Mammary epithelial cell (primary cell): ENCODE measurements at regions of chr22 and their contacts with region 1.

Region 1: GRCh38 chr22:44625981-44626687 is 75.9 kb upstream of the PRR5 start:
- DNase-seq: peak; percentile 35
- H3K4me3 ChIP-seq: no peak overlapping the region
- H3K27ac ChIP-seq: no peak overlapping the region
- H3K4me1 ChIP-seq: no peaks in the 10 kb centered on the region
- H3K27me3 ChIP-seq: peaks cover 2% of the 10 kb centered on the region
- CTCF ChIP-seq: peak; percentile 90 to 93

Region 2: GRCh38 chr22:43273902-43274484 is 1352.1 kb before region 1 on chr22:
- CTCF ChIA-PET with region 1: no interaction called
- dilution Hi-C with region 1: no loop called
- in situ Hi-C with region 1: no loop called
- intact Hi-C with region 1: loop called (anchors 10 kb)
- DNase-seq: peak; percentile 41
- H3K4me3 ChIP-seq: no peak overlapping the region
- H3K27ac ChIP-seq: no peak overlapping the region
- H3K4me1 ChIP-seq: peaks cover 11% of the 10 kb centered on the region
- H3K27me3 ChIP-seq: peaks cover 2% of the 10 kb centered on the region
- CTCF ChIP-seq: peak; percentile 65 to 84

Region 3: GRCh38 chr22:43884600-43885325 is 741.4 kb before region 1 on chr22:
- CTCF ChIA-PET with region 1: interaction called, 9 read pairs
- dilution Hi-C with region 1: no loop called
- in situ Hi-C with region 1: no loop called
- intact Hi-C with region 1: loop called (anchors 2 kb)
- DNase-seq: peak; percentile 23
- H3K4me3 ChIP-seq: no peak overlapping the region
- H3K27ac ChIP-seq: no peak overlapping the region
- H3K4me1 ChIP-seq: no peaks in the 10 kb centered on the region
- H3K27me3 ChIP-seq: no peaks in the 10 kb centered on the region
- CTCF ChIP-seq: peak; percentile 76 to 89

Region 4: GRCh38 chr22:43993027-43993760 is 632.9 kb before region 1 on chr22:
- CTCF ChIA-PET with region 1: interaction called, 3 read pairs
- dilution Hi-C with region 1: no loop called
- in situ Hi-C with region 1: loop called (anchors 10 kb)
- intact Hi-C with region 1: loop called (anchors 1 kb)
- DNase-seq: peak; percentile 11
- H3K4me3 ChIP-seq: no peak overlapping the region
- H3K27ac ChIP-seq: no peak overlapping the region
- H3K4me1 ChIP-seq: no peaks in the 10 kb centered on the region
- H3K27me3 ChIP-seq: no peaks in the 10 kb centered on the region
- CTCF ChIP-seq: peak; percentile 95 to 97

Region 5: GRCh38 chr22:44075670-44076069 is 550.5 kb before region 1 on chr22:
- CTCF ChIA-PET with region 1: no interaction called
- dilution Hi-C with region 1: no loop called
- in situ Hi-C with region 1: loop called in 1 of 2 experiments (anchors 5 kb)
- intact Hi-C with region 1: no loop called
- DNase-seq: no peak
- H3K4me3 ChIP-seq: no peak overlapping the region
- H3K27ac ChIP-seq: no peak overlapping the region
- H3K4me1 ChIP-seq: no peaks in the 10 kb centered on the region
- H3K27me3 ChIP-seq: no peaks in the 10 kb centered on the region
- CTCF ChIP-seq: no peak

Region 6: DNA sequence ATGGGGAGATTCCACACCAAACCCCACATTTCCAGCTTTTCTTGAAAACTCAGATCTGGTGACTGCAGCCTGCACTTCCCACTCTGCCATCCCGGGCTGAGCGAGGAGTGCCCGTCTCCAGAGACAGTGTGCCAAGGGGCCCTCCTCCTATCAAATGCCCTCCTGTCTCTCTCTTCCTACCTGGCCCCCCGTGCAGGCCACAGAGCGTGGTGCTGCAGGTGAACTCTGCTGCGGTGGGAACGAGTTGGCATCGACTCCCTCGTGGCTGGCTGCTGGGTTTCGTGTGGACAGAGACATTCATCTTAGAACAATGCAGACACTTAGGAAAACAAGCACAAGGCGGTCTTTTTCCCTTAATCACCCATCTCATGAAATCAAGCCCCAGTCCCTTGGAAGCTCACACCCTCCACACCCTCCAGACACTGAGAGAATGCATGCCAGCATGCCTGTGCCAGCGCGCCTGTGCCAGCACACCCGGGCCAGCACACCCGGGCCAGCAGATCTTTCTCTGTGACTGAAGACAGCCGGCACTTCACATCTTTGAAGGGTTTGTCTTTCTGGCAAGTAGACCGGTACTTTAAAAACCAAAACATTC is 537.1 kb before region 1 on chr22:
- CTCF ChIA-PET with region 1: interaction called, 4 read pairs
- dilution Hi-C with region 1: no loop called
- in situ Hi-C with region 1: loop called in 1 of 2 experiments (anchors 5 kb)
- intact Hi-C with region 1: loop called (anchors 2 kb)
- DNase-seq: peak; percentile 78
- H3K4me3 ChIP-seq: no peak overlapping the region
- H3K27ac ChIP-seq: no peak overlapping the region
- H3K4me1 ChIP-seq: peaks cover 9% of the 10 kb centered on the region
- H3K27me3 ChIP-seq: no peaks in the 10 kb centered on the region
- CTCF ChIP-seq: no peak

Region 7: DNA sequence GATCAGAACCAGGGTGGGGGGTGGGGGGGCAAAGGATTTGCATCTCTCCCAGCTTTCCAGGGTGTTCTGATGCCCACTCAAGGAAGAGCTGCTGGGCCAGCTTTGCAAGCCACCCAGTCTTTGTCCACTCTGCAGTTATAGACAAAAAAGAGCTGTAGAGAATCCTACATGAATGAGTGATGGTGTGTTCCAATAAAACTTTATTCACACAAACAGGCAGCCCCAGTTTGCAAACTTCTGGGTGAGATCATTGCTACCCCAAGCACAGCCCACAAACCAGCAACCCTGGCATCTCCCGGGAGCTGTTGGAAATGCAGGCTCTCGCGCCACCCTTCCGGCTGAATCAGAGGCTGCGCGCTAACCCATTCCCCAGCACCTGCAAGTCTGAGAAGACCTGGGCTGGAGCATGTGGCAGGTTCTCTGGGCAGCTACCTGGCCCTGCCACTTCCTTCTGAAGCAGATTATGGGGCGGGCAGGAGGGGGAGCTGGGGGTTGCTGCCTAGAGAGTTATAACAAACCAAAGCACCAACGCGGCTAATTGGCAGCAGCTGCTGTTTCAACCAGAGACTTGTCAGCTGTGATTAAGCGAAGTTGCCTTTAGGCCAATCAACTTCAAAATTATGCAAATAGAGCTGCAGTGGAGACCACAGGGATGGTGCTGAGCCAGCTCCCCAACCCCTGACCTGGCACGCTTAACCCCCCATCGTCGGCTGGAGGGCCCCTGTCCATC is 309.6 kb before region 1 on chr22:
- CTCF ChIA-PET with region 1: no interaction called
- dilution Hi-C with region 1: no loop called
- in situ Hi-C with region 1: no loop called
- intact Hi-C with region 1: no loop called
- DNase-seq: no peak
- H3K4me3 ChIP-seq: no peak overlapping the region
- H3K27ac ChIP-seq: no peak overlapping the region
- H3K4me1 ChIP-seq: peaks cover 7% of the 10 kb centered on the region
- H3K27me3 ChIP-seq: no peaks in the 10 kb centered on the region
- CTCF ChIP-seq: no peak

Region 8: GRCh38 chr22:44337678-44338004 is 288.5 kb before region 1 on chr22:
- CTCF ChIA-PET with region 1: no interaction called
- dilution Hi-C with region 1: no loop called
- in situ Hi-C with region 1: no loop called
- intact Hi-C with region 1: loop called (anchors 1 kb)
- DNase-seq: peak; percentile 52
- H3K4me3 ChIP-seq: no peak overlapping the region
- H3K27ac ChIP-seq: no peak overlapping the region
- H3K4me1 ChIP-seq: peaks cover 14% of the 10 kb centered on the region
- H3K27me3 ChIP-seq: no peaks in the 10 kb centered on the region
- CTCF ChIP-seq: no peak

Region 9: GRCh38 chr22:44486538-44486937 is 139.6 kb before region 1 on chr22:
- CTCF ChIA-PET with region 1: no interaction called
- dilution Hi-C with region 1: no loop called
- in situ Hi-C with region 1: no loop called
- intact Hi-C with region 1: no loop called
- DNase-seq: no peak
- H3K4me3 ChIP-seq: no peak overlapping the region
- H3K27ac ChIP-seq: no peak overlapping the region
- H3K4me1 ChIP-seq: no peaks in the 10 kb centered on the region
- H3K27me3 ChIP-seq: no peaks in the 10 kb centered on the region
- CTCF ChIP-seq: no peak